ENCODE measurements at regions of chr17 and their contacts with region 1.

Region 1: GRCh38 chr17:56977673-56978395 is at the start of gene SCPEP1:
- DNase-seq: peak; percentile 93
- H3K4me3 Mint-ChIP-seq: peak within 1 kb of the TSS; percentile 90
- H3K27ac Mint-ChIP-seq: peak within 1 kb of the TSS; percentile 87
- H3K4me1 Mint-ChIP-seq: peaks cover 21% of the 10 kb centered on the region
- H3K27me3 Mint-ChIP-seq: peaks cover 29% of the 10 kb centered on the region
- total RNA-seq, gene SCPEP1: 7.2 and 8.3 TPM in 2 replicates

Region 2: DNA sequence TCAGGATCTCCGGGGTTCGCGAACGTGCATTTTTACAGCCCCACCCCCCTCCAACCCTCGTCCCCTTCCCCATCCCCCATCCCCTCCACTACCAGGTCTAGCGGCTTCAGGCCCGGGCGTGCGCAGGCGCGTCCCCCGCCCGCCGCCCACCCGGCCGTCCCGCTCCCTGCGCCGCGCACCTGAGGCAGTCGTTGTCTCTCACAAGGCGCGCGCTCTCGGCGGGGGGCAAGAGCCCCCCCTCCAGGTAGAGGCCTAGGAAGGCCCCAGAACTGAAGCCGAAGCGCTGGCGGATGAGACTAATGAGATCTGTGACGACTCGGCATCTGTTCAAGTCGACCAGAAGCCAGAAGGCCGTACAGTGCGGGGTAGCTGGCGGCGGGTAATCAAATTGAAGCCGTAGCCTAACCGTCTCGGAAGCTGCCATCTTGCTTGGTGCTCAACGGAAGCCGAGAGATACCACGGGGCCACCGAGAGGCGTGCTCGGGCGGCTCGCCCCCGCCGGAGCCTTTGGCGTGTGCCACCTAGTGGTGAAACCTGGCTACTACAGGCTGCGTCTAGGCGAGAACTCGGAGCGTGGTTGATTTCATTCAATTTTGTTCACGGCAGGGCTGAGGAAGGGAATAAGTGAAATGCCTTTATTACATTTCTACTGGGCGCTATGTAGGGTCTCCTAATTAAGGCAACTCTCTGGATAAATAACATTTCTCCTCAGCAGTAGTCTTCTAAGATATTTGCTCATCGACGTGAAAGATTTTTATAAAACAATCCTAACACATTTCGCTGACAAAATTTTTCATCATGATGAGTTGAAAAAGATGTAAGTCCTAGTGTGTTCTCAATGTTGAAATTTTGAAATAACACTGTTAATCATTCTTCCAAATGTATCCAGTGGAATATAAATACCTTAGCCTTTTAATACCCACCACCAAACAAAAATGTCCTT is 17.0 kb before region 1 on chr17 and contains the start of gene COIL:
- intact Hi-C with region 1: loop called (anchors 1 kb)
- DNase-seq: peak; percentile 98
- H3K4me3 Mint-ChIP-seq: peak within 1 kb of the TSS; percentile 84
- H3K27ac Mint-ChIP-seq: peak within 1 kb of the TSS; percentile 85
- H3K4me1 Mint-ChIP-seq: peaks cover 19% of the 10 kb centered on the region
- H3K27me3 Mint-ChIP-seq: peaks cover 2% of the 10 kb centered on the region
- total RNA-seq, gene COIL: 23.1 and 23.3 TPM in 2 replicates

Region 3: DNA sequence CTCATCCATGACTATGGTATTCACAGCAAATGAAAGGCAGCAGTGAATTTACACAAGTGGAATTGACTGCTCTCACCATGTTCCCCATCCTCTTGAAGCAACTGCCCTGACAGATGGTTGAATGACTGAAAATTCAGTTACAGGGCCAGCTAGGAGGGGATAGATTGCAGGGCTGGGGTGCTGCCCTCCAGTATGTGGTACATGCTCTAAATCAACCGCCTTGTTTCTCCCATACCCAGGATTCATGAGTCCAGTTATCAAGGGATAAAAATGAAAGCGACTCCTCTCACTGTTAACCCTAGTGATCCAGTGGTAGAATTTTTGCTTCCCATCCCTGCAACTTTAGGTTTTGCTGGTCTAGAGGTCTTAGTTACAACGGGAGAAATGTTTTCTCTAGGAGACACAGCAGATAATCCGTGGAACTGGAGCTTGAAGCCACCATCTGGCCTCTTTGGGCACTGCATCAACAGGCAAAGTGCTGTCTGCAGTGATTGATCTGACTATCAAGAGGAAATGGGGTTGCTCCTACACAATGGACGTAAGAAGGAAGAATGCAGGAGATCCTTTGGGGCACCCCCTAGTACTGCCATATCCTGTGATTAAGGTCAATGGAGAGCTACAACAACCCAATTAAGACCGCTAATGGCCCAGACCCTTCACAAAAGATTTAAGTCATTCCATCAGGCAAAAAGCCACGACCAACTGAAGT is 32.1 kb after region 1 on chr17:
- intact Hi-C with region 1: no loop called
- DNase-seq: peak; percentile 83
- H3K4me3 Mint-ChIP-seq: no peak overlapping the region
- H3K27ac Mint-ChIP-seq: no peak overlapping the region
- H3K4me1 Mint-ChIP-seq: peaks cover 13% of the 10 kb centered on the region
- H3K27me3 Mint-ChIP-seq: peaks cover 16% of the 10 kb centered on the region

Measured in activated CD4-positive, alpha-beta T cell treated with anti-CD3 and anti-CD28 coated beads, Interleukin-2, amount 10 ng/mL, durations not matched to agents 24 days and 14 days (primary cell).